Calu3 (cell line): ENCODE measurements at regions of chr4 and their contacts with region 1.

Region 1: GRCh38 chr4:186627226-186627865 is 72.0 kb upstream of the MTNR1A start:
- DNase-seq: peak; percentile 20
- H3K4me3 Mint-ChIP-seq: no peak overlapping the region
- H3K27ac Mint-ChIP-seq: no peak overlapping the region
- H3K4me1 Mint-ChIP-seq: peaks cover 13% of the 10 kb centered on the region
- H3K27me3 Mint-ChIP-seq: no peaks in the 10 kb centered on the region
- CTCF ChIP-seq: no peak

Region 2: GRCh38 chr4:186643501-186644310 is 16.4 kb after region 1 on chr4:
- CTCF ChIA-PET with region 1: no interaction called
- intact Hi-C with region 1: loop called (anchors 1 kb)
- DNase-seq: peak; percentile 18
- H3K4me3 Mint-ChIP-seq: no peak overlapping the region
- H3K27ac Mint-ChIP-seq: peak overlapping the region; percentile 77
- H3K4me1 Mint-ChIP-seq: peaks cover 48% of the 10 kb centered on the region
- H3K27me3 Mint-ChIP-seq: no peaks in the 10 kb centered on the region
- CTCF ChIP-seq: no peak

Region 3: GRCh38 chr4:186657764-186658163 is 30.4 kb after region 1 on chr4:
- CTCF ChIA-PET with region 1: no interaction called
- intact Hi-C with region 1: no loop called
- DNase-seq: no peak
- H3K4me3 Mint-ChIP-seq: no peak overlapping the region
- H3K27ac Mint-ChIP-seq: no peak overlapping the region
- H3K4me1 Mint-ChIP-seq: peaks cover 43% of the 10 kb centered on the region
- H3K27me3 Mint-ChIP-seq: no peaks in the 10 kb centered on the region
- CTCF ChIP-seq: no peak